Naive thymus-derived CD4-positive, alpha-beta T cell (primary cell): ENCODE measurements at regions of chr14 and their contacts with region 1.

Region 1: GRCh38 chr14:95993768-95994592 is 45.2 kb upstream of the C14orf132 start:
- DNase-seq: peak in 7 of 9 donors; percentile 5 to 45 (median 37)
- ATAC-seq: no peak
- H3K4me3 ChIP-seq: no peak overlapping the region
- H3K4me3 Mint-ChIP-seq: no peak overlapping the region
- H3K27ac ChIP-seq: no peak overlapping the region
- H3K27ac Mint-ChIP-seq: no peak overlapping the region
- H3K4me1 ChIP-seq: no peaks in the 10 kb centered on the region
- H3K4me1 Mint-ChIP-seq: no peaks in the 10 kb centered on the region
- H3K27me3 ChIP-seq: no peaks in the 10 kb centered on the region
- H3K27me3 Mint-ChIP-seq: peaks cover 17 to 70% (median 55%) of the 10 kb centered on the region in 5 donors

Region 2: DNA sequence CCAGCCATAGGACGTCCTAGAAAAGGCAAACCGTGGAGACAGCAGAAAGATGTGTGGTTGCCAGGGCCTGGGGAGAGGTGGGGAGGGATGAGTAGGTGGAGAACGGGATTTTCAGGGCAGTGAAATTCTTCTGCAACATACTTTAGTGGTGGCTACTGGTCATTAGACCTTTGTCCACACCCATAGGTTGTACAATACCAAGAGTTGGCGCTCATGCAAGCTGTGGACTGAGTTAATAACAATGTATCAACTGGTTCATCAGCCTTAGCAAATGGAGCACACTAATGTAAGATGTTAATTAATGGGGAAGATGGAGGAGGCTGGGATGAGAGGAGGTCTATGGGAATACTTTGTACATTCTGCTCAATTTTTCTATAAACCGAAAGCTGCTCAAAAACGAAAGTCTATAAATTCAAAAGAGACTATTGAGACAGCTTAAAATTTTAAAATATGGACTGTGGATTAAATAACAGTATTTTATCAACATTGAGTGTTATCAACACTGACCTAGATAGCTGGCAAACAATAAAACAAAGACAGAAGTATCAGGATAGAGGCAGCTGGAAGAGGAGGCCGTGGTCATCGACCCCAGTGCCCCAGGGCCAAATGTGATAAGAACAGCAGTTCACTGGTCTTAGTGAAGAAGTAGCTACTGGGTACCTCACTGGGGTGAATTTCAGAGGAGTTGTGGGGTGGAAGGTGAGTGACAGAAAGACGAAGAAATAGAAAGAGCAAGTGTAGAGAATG is 568.4 kb before region 1 on chr14:
- CTCF ChIA-PET with region 1: no interaction called
- POLR2A ChIA-PET with region 1: no interaction called
- intact Hi-C with region 1: loop called in 1 of 2 experiments (anchors 5 kb)
- DNase-seq: no peak
- ATAC-seq: no peak
- H3K4me3 ChIP-seq: no peak overlapping the region
- H3K4me3 Mint-ChIP-seq: no peak overlapping the region
- H3K27ac ChIP-seq: no peak overlapping the region
- H3K27ac Mint-ChIP-seq: peak overlapping the region in 2 of 9 donors; percentile 34 to 52
- H3K4me1 ChIP-seq: no peaks in the 10 kb centered on the region
- H3K4me1 Mint-ChIP-seq: peaks cover 0 to 6% (median 0%) of the 10 kb centered on the region in 7 donors
- H3K27me3 ChIP-seq: no peaks in the 10 kb centered on the region
- H3K27me3 Mint-ChIP-seq: no peaks in the 10 kb centered on the region

Region 3: DNA sequence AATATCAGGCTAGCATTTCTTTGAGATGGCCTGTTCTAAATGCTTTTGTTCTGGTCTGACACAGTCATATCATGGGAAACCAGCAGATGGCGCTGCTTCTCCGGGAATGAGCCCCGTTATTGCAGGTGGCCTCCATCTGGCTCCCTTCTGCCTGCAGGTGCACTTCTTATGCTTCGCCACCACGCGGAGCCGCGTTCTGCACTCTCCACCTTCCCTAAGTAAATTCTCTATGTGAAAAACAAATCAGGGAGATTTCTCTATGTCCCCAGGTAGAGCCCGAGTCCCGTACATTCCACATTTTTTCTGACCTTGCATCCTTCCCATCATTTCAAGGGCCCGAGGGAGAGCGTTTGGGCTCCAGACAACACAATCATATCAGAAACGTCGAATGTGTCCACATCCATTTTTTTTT is 433.0 kb before region 1 on chr14:
- CTCF ChIA-PET with region 1: interaction called, 3 read pairs
- POLR2A ChIA-PET with region 1: no interaction called
- intact Hi-C with region 1: loop called (anchors 1 kb)
- DNase-seq: peak; percentile 53 to 85 (median 80)
- ATAC-seq: peak; percentile 94
- H3K4me3 ChIP-seq: no peak overlapping the region
- H3K4me3 Mint-ChIP-seq: no peak overlapping the region
- H3K27ac ChIP-seq: no peak overlapping the region
- H3K27ac Mint-ChIP-seq: no peak overlapping the region
- H3K4me1 ChIP-seq: no peaks in the 10 kb centered on the region
- H3K4me1 Mint-ChIP-seq: peaks cover 0 to 5% (median 3%) of the 10 kb centered on the region in 7 donors
- H3K27me3 ChIP-seq: no peaks in the 10 kb centered on the region
- H3K27me3 Mint-ChIP-seq: peaks cover 6 to 14% (median 7%) of the 10 kb centered on the region in 5 donors

Region 4: GRCh38 chr14:95935228-95935822 is 58.7 kb before region 1 on chr14:
- CTCF ChIA-PET with region 1: no interaction called
- POLR2A ChIA-PET with region 1: no interaction called
- intact Hi-C with region 1: no loop called
- DNase-seq: peak in 5 of 9 donors; percentile 2 to 26 (median 9)
- ATAC-seq: no peak
- H3K4me3 ChIP-seq: no peak overlapping the region
- H3K4me3 Mint-ChIP-seq: no peak overlapping the region
- H3K27ac ChIP-seq: no peak overlapping the region
- H3K27ac Mint-ChIP-seq: no peak overlapping the region
- H3K4me1 ChIP-seq: no peaks in the 10 kb centered on the region
- H3K4me1 Mint-ChIP-seq: no peaks in the 10 kb centered on the region
- H3K27me3 ChIP-seq: no peaks in the 10 kb centered on the region
- H3K27me3 Mint-ChIP-seq: peaks cover 0 to 33% (median 24%) of the 10 kb centered on the region in 5 donors

Region 5: GRCh38 chr14:96011607-96012006 is 17.6 kb after region 1 on chr14:
- CTCF ChIA-PET with region 1: no interaction called
- POLR2A ChIA-PET with region 1: no interaction called
- intact Hi-C with region 1: no loop called
- DNase-seq: no peak
- ATAC-seq: no peak
- H3K4me3 ChIP-seq: no peak overlapping the region
- H3K4me3 Mint-ChIP-seq: no peak overlapping the region
- H3K27ac ChIP-seq: no peak overlapping the region
- H3K27ac Mint-ChIP-seq: peak overlapping the region in 1 of 9 donors; percentile 74
- H3K4me1 ChIP-seq: no peaks in the 10 kb centered on the region
- H3K4me1 Mint-ChIP-seq: peaks cover 0 to 1% (median 0%) of the 10 kb centered on the region in 7 donors
- H3K27me3 ChIP-seq: no peaks in the 10 kb centered on the region
- H3K27me3 Mint-ChIP-seq: peaks cover 0 to 14% (median 6%) of the 10 kb centered on the region in 5 donors

Region 6: DNA sequence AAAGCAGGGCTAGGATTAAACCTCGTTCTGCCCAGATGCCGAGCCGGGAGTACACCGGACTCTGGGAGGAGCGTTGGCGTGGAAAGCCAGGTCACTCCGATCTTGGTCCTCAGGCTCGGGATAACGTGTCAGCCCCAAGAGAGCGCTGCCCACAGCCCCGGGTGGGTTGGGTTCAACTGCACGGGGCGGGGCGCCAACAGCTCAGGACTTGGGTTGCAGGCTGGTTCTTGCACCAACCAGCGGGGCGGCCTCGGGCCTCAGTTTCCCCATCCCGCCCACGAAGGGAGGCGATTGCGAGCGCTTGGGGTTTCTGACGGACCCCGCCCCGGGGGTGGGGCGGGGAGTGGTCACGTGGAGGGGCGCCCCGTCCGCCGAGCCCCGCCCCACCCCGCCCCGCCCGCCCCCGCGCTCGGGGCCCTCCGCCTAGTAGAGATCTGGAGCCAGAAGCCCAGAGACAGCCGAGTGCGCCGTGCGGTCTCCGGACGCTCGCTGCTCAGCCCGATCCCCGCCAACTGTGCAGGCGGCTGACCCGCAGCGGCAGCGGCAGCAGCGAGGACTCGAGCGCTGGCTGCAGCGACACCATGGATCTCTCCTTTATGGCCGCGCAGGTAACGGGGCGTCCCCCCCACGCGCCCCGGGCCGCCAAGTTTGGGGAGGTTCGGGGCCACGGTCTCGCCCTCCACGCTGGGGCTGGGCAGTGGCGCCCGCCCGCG is 45.1 kb after region 1 on chr14 and contains the start of gene C14orf132:
- CTCF ChIA-PET with region 1: interaction called, 4 read pairs
- POLR2A ChIA-PET with region 1: no interaction called
- intact Hi-C with region 1: loop called in 1 of 2 experiments (anchors 5 kb)
- DNase-seq: peak; percentile 7 to 56 (median 27)
- ATAC-seq: peak; percentile 85
- H3K4me3 ChIP-seq: peak within 1 kb of the TSS; percentile 48
- H3K4me3 Mint-ChIP-seq: peak within 1 kb of the TSS; percentile 76 to 93 (median 84)
- H3K27ac ChIP-seq: peak within 1 kb of the TSS; percentile 18
- H3K27ac Mint-ChIP-seq: peak within 1 kb of the TSS in 5 of 9 donors; percentile 25 to 74 (median 62)
- H3K4me1 ChIP-seq: peaks cover 0 to 5% of the 10 kb centered on the region in 2 donors
- H3K4me1 Mint-ChIP-seq: peaks cover 11 to 44% (median 30%) of the 10 kb centered on the region in 7 donors
- H3K27me3 ChIP-seq: peaks cover 0 to 9% of the 10 kb centered on the region in 2 donors
- H3K27me3 Mint-ChIP-seq: peaks cover 0 to 53% (median 32%) of the 10 kb centered on the region in 5 donors
- total RNA-seq, gene C14orf132: 0.41 to 22.9 (median 7.8) TPM

Region 7: GRCh38 chr14:96100161-96101029 is 106.4 kb after region 1 on chr14:
- CTCF ChIA-PET with region 1: interaction called, 5 read pairs
- POLR2A ChIA-PET with region 1: no interaction called
- intact Hi-C with region 1: loop called in 1 of 2 experiments (anchors 1 kb)
- DNase-seq: peak; percentile 39 to 80 (median 73)
- ATAC-seq: peak; percentile 86
- H3K4me3 ChIP-seq: no peak overlapping the region
- H3K4me3 Mint-ChIP-seq: no peak overlapping the region
- H3K27ac ChIP-seq: no peak overlapping the region
- H3K27ac Mint-ChIP-seq: peak overlapping the region in 5 of 9 donors; percentile 11 to 88 (median 18)
- H3K4me1 ChIP-seq: no peaks in the 10 kb centered on the region
- H3K4me1 Mint-ChIP-seq: peaks cover 0 to 10% (median 5%) of the 10 kb centered on the region in 7 donors
- H3K27me3 ChIP-seq: no peaks in the 10 kb centered on the region
- H3K27me3 Mint-ChIP-seq: peaks cover 0 to 12% (median 0%) of the 10 kb centered on the region in 5 donors